ENCODE measurements at regions of chr9 and their contacts with region 1.

Region 1: DNA sequence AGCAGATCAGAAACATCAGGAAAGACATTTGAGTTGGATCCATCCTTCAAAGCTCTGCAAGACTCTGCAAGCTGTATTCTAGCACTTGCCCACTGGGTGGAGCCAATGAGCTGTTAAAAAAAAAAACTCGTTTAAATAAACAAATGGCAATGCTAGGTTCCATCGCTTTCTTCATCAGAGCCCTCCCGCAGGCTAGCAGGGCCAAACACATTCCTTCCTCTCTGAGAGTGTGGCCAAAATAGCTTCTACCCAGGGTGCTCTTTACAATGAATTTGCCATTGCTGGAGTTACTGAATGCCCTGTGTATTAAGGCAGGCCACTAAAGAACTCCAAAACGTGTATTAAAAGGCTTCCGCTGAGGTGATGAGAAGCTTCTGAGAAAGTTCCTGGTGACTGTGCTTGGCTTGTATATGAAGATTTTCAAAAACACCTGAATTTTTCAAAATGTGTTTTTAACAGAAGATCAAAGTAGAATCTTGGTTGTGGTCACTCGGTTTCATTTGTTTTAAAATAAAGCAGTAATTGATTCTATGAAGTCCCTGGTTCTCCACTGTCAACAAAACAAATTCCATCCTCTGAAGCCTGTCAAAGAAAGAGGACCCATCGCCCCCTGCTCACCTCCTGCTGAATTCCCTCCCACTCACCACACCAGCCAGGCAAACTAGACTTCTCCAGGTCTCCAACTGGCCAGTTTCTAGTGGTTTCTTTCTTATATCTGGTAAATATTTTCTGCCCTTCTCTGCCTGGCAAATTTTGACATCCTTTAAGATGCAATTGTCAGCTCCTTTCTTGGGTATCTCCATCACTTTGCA is 36.5 kb upstream of the EQTN start:
- H3K4me3 Mint-ChIP-seq: no peak overlapping the region
- H3K27ac Mint-ChIP-seq: peak overlapping the region; percentile 94
- H3K4me1 Mint-ChIP-seq: peaks cover 70% of the 10 kb centered on the region
- H3K27me3 Mint-ChIP-seq: no peaks in the 10 kb centered on the region

Region 2: DNA sequence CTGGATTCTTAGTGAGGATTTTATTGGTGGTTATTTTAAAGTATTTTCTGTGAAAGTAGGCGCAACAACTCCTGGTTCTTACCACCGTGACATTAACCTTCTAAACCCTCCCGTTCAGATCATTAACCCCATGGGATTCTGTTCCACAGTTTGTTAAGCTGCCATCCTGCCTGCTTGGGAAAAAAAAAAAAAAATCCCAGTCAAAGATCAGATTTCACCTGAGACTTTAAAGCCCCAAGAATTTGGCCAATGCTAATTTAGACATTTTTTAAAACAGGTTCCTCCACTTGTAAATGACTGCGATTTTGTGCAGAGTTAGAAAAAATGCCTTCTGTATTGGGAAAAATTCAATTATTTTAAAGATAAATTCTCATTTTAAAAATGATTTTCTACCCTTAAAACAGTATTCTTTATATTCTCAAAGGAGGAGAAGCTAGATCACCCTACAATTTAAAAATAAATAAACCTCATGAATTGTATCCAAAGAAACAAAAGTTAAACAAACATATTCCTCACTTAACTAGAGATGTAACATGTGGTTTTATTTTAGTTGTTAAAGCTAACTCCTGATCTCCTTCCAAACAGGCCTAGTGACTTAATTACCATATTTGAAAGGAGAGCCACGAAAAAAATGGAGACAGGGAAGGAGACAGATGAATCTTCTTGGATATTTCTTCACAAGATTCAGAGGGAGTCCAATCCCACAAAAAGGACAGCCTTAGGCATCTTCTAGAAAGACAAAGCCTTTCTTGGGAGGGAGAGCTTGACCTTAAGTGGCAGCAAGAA is 97.5 kb after region 1 on chr9:
- intact Hi-C with region 1: loop called (anchors 5 kb)
- H3K4me3 Mint-ChIP-seq: no peak overlapping the region
- H3K27ac Mint-ChIP-seq: peak overlapping the region; percentile 4
- H3K4me1 Mint-ChIP-seq: peaks cover 83% of the 10 kb centered on the region
- H3K27me3 Mint-ChIP-seq: no peaks in the 10 kb centered on the region

Region 3: DNA sequence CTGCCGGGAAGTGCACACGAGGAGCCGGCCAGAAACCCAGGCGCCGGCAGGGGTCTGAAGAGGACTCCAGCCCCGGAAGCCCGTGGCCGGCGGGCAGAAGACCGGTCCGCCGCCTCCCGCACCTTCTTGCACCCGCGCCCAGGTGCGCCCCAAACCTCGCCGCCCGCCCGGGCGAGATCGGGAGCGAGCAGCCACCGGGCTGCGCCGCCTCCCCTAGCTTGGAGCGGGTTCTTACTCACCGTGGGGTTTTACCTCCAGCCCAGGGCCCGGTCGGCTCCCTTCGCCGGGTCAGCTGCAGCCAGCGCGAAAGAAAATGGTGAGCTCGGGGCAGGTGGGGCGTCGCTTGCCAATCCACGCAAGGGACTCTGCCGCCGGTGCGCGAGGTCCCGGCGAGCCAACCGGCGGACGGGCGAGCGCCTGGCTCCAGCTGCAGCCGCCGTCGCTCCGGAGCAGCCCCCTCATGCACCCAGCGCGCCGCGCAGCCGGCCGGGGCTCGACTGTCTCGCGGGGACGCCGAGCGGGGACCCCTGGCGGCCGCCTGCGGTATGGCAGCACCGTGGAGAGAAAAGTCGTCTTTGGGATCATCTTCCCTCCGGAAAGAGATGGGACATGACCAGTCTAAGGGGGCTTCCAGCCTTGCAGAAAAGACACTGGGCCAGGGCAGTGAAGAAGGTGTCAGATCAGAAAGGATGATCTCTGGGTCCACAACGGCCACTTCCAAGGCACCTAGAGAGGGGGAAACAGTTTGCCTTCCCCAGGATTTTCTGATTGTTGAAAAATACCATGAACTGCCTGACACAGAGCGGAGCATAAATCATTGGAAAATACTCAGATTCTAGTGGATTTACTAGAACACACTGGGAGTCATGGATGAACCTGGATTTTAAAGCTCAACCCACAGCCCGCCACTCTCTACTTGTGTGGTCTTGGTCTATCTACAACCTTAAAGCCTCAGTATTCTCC is 196.2 kb after region 1 on chr9 and contains the start of gene MOB3B:
- intact Hi-C with region 1: loop called (anchors 2 kb)
- H3K4me3 Mint-ChIP-seq: peak within 1 kb of the TSS; percentile 91
- H3K27ac Mint-ChIP-seq: peak within 1 kb of the TSS; percentile 97
- H3K4me1 Mint-ChIP-seq: peaks cover 67% of the 10 kb centered on the region
- H3K27me3 Mint-ChIP-seq: no peaks in the 10 kb centered on the region

Region 4: GRCh38 chr9:27714388-27714787 is 380.9 kb after region 1 on chr9:
- intact Hi-C with region 1: loop called (anchors 10 kb)
- H3K4me3 Mint-ChIP-seq: no peak overlapping the region
- H3K27ac Mint-ChIP-seq: no peak overlapping the region
- H3K4me1 Mint-ChIP-seq: peaks cover 24% of the 10 kb centered on the region
- H3K27me3 Mint-ChIP-seq: peaks cover 4% of the 10 kb centered on the region

Measured in dendritic cell treated with granulocyte-macrophage colony-stimulating factor and Interleukin-4, amounts not matched to agents 40 ng/mL and 50 ng/mL, for 4 days (primary cell).